Caco-2 (cell line): ENCODE measurements at regions of chr4 and their contacts with region 1.

Region 1: DNA sequence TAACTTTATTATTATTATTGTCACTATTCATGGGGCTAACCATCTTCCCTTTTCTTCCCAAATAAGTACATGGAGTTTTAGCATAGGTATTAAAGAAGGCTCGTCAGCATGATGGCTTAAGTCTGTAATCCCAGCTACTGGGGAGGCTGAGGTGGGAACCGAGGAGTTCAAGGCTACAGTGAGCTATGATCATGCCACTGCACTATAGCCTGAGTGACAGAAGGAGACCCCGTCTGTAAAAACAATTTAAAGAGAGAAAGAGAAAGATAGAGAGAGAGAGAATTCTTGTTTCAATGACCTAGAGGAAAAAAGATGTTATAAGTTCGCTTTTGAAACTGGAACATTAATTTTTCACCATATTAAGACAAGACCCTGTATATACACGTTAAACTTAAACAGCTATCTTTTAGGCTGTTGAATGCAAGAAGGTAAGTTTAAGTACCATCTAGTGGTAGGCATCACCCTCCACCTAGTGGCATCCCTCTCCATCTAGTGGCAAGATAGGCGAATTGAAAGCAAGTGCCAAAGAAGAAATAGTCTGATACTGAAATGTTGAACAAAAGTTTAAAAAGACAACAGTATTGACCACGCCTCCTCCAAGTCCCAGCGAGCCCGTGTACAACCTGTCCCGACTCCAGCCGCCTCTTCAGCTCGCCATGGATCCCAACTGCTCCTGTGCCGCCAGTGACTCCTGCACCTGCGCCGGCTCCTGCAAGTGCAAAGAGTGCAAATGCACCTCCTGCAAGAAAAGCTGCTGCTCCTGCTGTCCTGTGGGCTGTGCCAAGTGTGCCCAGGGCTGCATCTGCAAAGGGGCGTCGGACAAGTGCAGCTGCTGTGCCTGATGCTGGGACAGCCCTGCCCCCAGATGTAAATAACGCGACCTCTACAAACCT is 26.0 kb upstream of the YTHDC1 start:
- DNase-seq: peak; percentile 65 to 78
- H3K4me3 ChIP-seq: peak overlapping the region; percentile 50
- H3K4me3 Mint-ChIP-seq: peak overlapping the region; percentile 78
- H3K27ac Mint-ChIP-seq: no peak overlapping the region
- H3K4me1 ChIP-seq: no peaks in the 10 kb centered on the region
- H3K4me1 Mint-ChIP-seq: peaks cover 7% of the 10 kb centered on the region
- H3K27me3 ChIP-seq: no peaks in the 10 kb centered on the region
- H3K27me3 Mint-ChIP-seq: no peaks in the 10 kb centered on the region
- CTCF ChIP-seq: peak; percentile 70 to 84

Region 2: DNA sequence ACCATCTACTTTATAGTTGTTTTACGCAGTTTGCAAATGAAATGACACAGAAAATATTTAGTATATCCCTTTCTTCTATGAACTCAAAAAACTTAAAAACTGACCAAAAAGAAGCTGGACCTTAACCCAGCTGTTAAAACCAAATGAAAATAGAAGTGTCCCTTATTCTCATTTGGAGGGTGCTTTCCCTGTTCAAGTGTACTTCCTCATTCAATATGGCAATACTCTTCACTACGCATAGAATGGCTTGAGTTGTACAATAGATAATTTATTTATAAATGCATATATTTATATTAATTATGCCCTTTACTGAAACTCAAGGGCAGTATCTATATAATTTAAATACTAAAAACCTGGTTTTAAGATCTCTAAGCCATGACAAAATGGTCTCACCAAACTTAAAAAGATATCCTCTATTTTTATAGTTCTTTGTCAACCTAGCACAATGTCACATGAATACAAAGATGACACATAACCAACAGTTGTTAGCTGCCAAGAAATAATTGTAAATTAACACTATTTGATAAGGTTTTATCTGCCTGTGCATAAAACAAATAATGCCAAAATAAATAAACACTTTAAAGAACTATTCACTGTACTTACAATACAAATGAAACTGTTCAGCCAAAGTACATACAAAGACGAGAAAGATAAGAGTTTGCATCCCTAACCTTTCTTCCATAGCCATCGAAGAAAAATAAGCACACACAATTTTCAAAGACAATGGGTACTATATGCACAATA is 51.2 kb before region 1 on chr4:
- CTCF ChIA-PET with region 1: interaction called, 3 read pairs
- POLR2A ChIA-PET with region 1: no interaction called
- intact Hi-C with region 1: loop called (anchors 10 kb)
- DNase-seq: no peak
- H3K4me3 ChIP-seq: no peak overlapping the region
- H3K4me3 Mint-ChIP-seq: no peak overlapping the region
- H3K27ac Mint-ChIP-seq: no peak overlapping the region
- H3K4me1 ChIP-seq: peaks cover 5% of the 10 kb centered on the region; the same call in 1 of the 2 replicates
- H3K4me1 Mint-ChIP-seq: no peaks in the 10 kb centered on the region
- H3K27me3 ChIP-seq: no peaks in the 10 kb centered on the region
- H3K27me3 Mint-ChIP-seq: no peaks in the 10 kb centered on the region
- CTCF ChIP-seq: no peak

Region 3: DNA sequence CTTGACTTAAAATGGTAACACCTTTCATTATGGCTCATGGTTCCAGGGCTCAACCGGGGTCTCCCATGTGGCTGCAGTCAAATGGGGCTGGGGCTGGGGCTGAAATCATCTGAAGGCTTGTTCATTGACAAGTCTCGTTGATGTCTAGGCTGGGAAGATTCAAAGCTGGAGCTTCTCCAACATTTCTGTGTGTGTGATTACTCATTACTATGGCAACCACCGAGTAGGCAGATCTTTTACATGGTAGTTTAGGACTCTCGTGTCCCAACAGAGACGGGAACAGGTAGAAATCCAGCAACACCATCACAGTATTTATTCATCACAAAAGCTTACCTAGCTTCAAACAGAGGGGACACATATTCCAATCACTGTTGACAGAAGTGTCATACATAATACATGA is 33.8 kb before region 1 on chr4:
- CTCF ChIA-PET with region 1: no interaction called
- POLR2A ChIA-PET with region 1: no interaction called
- intact Hi-C with region 1: loop called (anchors 5 kb)
- DNase-seq: no peak
- H3K4me3 ChIP-seq: no peak overlapping the region
- H3K4me3 Mint-ChIP-seq: no peak overlapping the region
- H3K27ac Mint-ChIP-seq: no peak overlapping the region
- H3K4me1 ChIP-seq: peaks cover 33% of the 10 kb centered on the region
- H3K4me1 Mint-ChIP-seq: peaks cover 20% of the 10 kb centered on the region
- H3K27me3 ChIP-seq: no peaks in the 10 kb centered on the region
- H3K27me3 Mint-ChIP-seq: no peaks in the 10 kb centered on the region
- CTCF ChIP-seq: no peak

Region 4: GRCh38 chr4:68426516-68426915 is 50.6 kb after region 1 on chr4:
- CTCF ChIA-PET with region 1: no interaction called
- POLR2A ChIA-PET with region 1: no interaction called
- intact Hi-C with region 1: no loop called
- DNase-seq: no peak
- H3K4me3 ChIP-seq: no peak overlapping the region
- H3K4me3 Mint-ChIP-seq: no peak overlapping the region
- H3K27ac Mint-ChIP-seq: no peak overlapping the region
- H3K4me1 ChIP-seq: no peaks in the 10 kb centered on the region
- H3K4me1 Mint-ChIP-seq: no peaks in the 10 kb centered on the region
- H3K27me3 ChIP-seq: no peaks in the 10 kb centered on the region
- H3K27me3 Mint-ChIP-seq: no peaks in the 10 kb centered on the region
- CTCF ChIP-seq: no peak